ENCODE measurements at regions of chr5 and their contacts with region 1.

Region 1: DNA sequence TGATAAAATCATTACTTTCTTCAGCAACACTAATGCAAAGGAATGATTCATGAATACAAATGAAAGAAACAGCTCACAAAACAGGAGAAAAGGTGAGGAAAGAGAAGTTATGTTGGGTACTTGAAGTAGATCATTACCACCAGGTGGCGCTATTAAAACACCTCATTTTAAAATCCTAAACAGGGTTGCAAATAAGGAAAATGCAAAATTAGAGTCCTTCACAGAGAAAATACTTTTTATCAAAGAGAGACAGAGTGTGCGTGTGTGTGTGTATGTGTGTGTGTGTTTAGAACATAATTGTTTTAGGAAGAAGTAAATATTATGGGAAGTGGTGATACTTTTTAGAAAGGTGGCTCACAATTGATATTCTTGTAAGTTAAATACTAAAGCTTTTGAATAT is 49.5 kb upstream of the CD180 start:
- DNase-seq: no peak
- H3K4me3 Mint-ChIP-seq: no peak overlapping the region
- H3K27ac Mint-ChIP-seq: no peak overlapping the region
- H3K4me1 Mint-ChIP-seq: peaks cover 8% of the 10 kb centered on the region
- H3K27me3 Mint-ChIP-seq: no peaks in the 10 kb centered on the region

Region 2: GRCh38 chr5:67010684-67011409 is 235.3 kb before region 1 on chr5:
- CTCF ChIA-PET with region 1: no interaction called
- intact Hi-C with region 1: no loop called
- DNase-seq: peak; percentile 32
- H3K4me3 Mint-ChIP-seq: peak overlapping the region; percentile 0
- H3K27ac Mint-ChIP-seq: peak overlapping the region; percentile 67
- H3K4me1 Mint-ChIP-seq: peaks cover 99% of the 10 kb centered on the region
- H3K27me3 Mint-ChIP-seq: no peaks in the 10 kb centered on the region

Region 3: GRCh38 chr5:67301285-67301903 is 55.3 kb after region 1 on chr5:
- CTCF ChIA-PET with region 1: interaction called, 13 read pairs
- intact Hi-C with region 1: loop called (anchors 5 kb)
- DNase-seq: no peak
- H3K4me3 Mint-ChIP-seq: no peak overlapping the region
- H3K27ac Mint-ChIP-seq: no peak overlapping the region
- H3K4me1 Mint-ChIP-seq: peaks cover 11% of the 10 kb centered on the region
- H3K27me3 Mint-ChIP-seq: peaks cover 1% of the 10 kb centered on the region

Region 4: DNA sequence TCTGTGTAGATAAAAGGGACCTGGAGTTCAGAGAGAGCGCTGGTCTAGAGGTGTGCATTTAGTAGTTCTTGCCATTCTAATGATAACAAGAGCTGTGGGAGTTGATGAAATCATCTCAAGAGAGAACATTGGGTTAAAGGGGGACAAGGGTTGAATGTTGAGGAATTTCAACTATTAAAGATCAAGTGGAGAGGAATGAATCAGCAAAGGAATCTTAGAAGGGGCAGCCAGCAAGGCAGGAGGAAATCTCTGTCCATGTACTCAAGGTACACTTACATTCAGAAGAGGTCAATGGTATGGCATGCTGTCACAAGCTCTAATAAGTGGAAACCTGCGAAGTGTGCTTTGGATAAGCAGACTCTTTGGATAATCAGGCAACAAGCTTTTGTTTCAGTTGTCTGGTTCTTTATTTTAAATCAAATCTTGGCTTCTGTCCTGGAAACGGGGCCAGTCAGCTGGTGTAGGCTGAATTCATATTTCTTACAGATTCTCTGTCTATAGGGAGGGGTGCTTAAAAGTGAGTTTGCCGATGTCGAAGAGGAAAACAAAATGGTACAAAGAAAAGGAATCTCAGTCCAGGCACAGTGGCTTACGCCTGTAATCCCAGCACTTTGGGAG is 270.9 kb after region 1 on chr5:
- CTCF ChIA-PET with region 1: no interaction called
- intact Hi-C with region 1: loop called (anchors 10 kb)
- DNase-seq: no peak
- H3K4me3 Mint-ChIP-seq: no peak overlapping the region
- H3K27ac Mint-ChIP-seq: no peak overlapping the region
- H3K4me1 Mint-ChIP-seq: peaks cover 47% of the 10 kb centered on the region
- H3K27me3 Mint-ChIP-seq: no peaks in the 10 kb centered on the region

Region 5: DNA sequence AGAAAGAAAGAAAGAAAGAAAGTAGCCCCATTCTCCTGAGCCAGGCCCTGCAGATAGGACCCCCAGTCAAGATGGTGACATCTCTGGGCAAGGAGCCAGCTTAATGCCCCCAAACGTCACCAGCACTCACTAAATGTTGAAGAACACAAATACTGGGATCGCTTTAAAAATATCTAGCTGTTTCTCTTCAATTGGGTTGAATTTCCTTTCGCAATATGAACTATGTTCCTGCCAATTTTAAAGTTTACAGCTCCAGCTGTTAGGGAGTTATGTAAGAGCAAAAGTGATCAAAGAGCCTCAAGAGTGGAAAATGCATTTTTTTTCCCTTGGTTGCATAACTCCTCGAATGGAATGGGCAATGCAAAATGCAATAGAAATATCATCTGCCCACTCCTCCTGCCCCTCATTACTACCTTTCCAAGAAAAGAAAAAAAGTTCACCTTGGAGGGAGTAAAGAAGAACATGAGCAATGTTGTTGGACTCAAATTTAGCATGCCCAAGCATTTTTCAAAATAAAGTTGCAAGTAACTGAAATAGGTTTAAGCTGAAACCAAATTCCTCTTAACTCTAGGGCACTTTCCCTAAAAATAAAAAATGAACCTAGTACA is 725.2 kb after region 1 on chr5:
- CTCF ChIA-PET with region 1: no interaction called
- intact Hi-C with region 1: loop called (anchors 10 kb)
- DNase-seq: no peak
- H3K4me3 Mint-ChIP-seq: no peak overlapping the region
- H3K27ac Mint-ChIP-seq: no peak overlapping the region
- H3K4me1 Mint-ChIP-seq: no peaks in the 10 kb centered on the region
- H3K27me3 Mint-ChIP-seq: no peaks in the 10 kb centered on the region

Region 6: DNA sequence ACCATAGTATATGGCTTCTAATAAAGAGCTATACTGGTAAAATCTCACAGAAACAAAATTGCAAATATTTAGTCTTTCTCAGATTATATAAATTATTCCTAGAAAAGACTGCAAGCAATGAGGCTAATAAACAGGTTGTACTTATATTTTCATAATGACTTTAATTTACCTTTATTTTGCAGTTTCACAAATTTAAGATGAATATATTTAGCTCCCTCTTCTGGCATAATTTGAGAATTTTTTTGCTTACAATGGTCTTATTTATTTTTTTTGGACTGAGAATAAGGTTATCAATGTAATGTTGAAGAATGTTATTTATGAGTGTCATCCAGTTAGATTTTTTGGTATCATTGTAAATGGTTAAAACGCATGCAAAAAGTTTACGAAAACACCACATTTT is 1026.2 kb after region 1 on chr5:
- CTCF ChIA-PET with region 1: interaction called, 4 read pairs
- intact Hi-C with region 1: loop called (anchors 1 kb)
- DNase-seq: no peak
- H3K4me3 Mint-ChIP-seq: no peak overlapping the region
- H3K27ac Mint-ChIP-seq: peak overlapping the region; percentile 36
- H3K4me1 Mint-ChIP-seq: peaks cover 82% of the 10 kb centered on the region
- H3K27me3 Mint-ChIP-seq: no peaks in the 10 kb centered on the region

Region 7: DNA sequence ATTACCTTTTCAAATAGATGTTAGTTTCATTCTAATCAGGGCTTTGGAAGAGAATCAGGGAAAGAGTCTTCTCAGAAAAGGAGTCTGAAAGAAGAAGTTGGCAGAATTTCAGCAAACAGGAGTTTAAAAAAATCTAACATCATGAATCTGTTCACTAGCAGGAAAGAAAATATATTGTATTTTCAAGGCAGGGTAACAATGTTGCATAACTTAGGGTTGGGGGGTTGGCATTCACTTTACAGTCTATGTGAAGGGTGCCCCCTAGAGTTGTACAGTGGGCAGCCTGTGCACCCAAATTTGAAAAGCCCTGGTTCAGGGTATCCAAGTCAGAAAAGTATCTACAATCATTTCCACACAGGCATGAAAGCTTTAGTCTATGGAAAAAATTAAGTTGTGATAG is 1499.3 kb after region 1 on chr5:
- CTCF ChIA-PET with region 1: no interaction called
- intact Hi-C with region 1: loop called (anchors 5 kb)
- DNase-seq: peak; percentile 27
- H3K4me3 Mint-ChIP-seq: no peak overlapping the region
- H3K27ac Mint-ChIP-seq: no peak overlapping the region
- H3K4me1 Mint-ChIP-seq: peaks cover 3% of the 10 kb centered on the region
- H3K27me3 Mint-ChIP-seq: no peaks in the 10 kb centered on the region

Region 8: GRCh38 chr5:69007726-69008368 is 1761.7 kb after region 1 on chr5:
- CTCF ChIA-PET with region 1: no interaction called
- intact Hi-C with region 1: loop called (anchors 1 kb)
- DNase-seq: peak; percentile 85
- H3K4me3 Mint-ChIP-seq: no peak overlapping the region
- H3K27ac Mint-ChIP-seq: no peak overlapping the region
- H3K4me1 Mint-ChIP-seq: no peaks in the 10 kb centered on the region
- H3K27me3 Mint-ChIP-seq: peaks cover 3% of the 10 kb centered on the region